Calu3 (cell line): ENCODE measurements at regions of chr6 and their contacts with region 1.

Region 1: GRCh38 chr6:137866914-137867684 is at the start of gene TNFAIP3:
- DNase-seq: peak; percentile 89
- H3K4me3 Mint-ChIP-seq: peak within 1 kb of the TSS; percentile 86
- H3K27ac Mint-ChIP-seq: peak within 1 kb of the TSS; percentile 71
- H3K4me1 Mint-ChIP-seq: peaks cover 25% of the 10 kb centered on the region
- H3K27me3 Mint-ChIP-seq: no peaks in the 10 kb centered on the region
- CTCF ChIP-seq: peak; percentile 63
- total RNA-seq, gene TNFAIP3: 19.4 and 22.6 TPM in 2 replicates

Region 2: GRCh38 chr6:137722749-137723272 is 144.3 kb before region 1 on chr6:
- CTCF ChIA-PET with region 1: no interaction called
- intact Hi-C with region 1: loop called (anchors 5 kb)
- DNase-seq: no peak
- H3K4me3 Mint-ChIP-seq: no peak overlapping the region
- H3K27ac Mint-ChIP-seq: no peak overlapping the region
- H3K4me1 Mint-ChIP-seq: peaks cover 7% of the 10 kb centered on the region
- H3K27me3 Mint-ChIP-seq: no peaks in the 10 kb centered on the region
- CTCF ChIP-seq: no peak

Region 3: DNA sequence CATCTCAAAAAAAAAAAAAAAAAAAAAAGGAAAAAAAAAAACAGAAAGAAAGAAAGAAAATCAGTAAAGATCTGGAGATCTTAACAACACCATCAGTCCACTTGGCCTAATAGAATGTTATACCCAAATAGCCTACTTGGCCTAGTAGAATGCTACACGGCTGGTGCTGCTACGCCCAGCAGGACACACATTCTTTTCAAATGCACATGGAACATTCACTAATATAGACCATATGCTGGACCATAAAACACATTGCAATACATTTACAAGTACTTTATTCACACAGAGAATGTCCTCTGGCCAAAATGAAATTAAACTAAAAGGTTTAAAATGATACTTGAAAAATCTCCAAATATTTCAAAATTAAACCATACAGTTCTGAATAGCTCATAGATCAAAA is 80.1 kb before region 1 on chr6:
- CTCF ChIA-PET with region 1: no interaction called
- intact Hi-C with region 1: no loop called
- DNase-seq: no peak
- H3K4me3 Mint-ChIP-seq: no peak overlapping the region
- H3K27ac Mint-ChIP-seq: no peak overlapping the region
- H3K4me1 Mint-ChIP-seq: no peaks in the 10 kb centered on the region
- H3K27me3 Mint-ChIP-seq: no peaks in the 10 kb centered on the region
- CTCF ChIP-seq: no peak

Region 4: DNA sequence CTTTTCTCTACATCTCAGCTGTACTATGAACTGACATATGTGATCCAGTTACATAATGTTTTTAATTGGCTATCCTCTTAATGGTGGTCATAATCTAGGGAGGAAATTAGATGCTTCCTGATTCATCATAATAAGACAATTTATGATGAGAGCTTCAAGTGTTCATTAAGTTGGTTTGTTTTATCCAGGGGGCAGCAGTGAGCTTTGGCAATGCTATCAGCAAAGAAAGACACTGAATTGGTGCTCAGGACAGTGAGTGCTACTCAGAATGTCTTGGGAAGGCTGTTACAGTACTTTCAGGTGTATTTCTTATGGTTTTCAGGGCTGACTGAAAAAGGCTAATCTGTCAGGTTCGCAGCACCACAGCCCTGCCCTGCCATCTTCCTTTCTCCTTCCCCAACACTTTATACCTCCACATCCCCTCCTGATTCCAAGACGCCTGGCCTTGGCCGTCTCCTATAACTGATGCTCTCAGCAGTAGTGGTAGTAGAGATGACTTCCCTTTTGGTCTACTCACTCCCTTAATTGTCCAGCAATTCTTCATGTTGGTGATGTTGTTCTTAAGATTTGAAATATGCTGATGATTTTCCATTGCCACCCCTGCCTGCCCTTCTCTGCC is 67.0 kb before region 1 on chr6:
- CTCF ChIA-PET with region 1: interaction called, 6 read pairs
- intact Hi-C with region 1: loop called (anchors 2 kb)
- DNase-seq: peak; percentile 41
- H3K4me3 Mint-ChIP-seq: no peak overlapping the region
- H3K27ac Mint-ChIP-seq: peak overlapping the region; percentile 81
- H3K4me1 Mint-ChIP-seq: peaks cover 14% of the 10 kb centered on the region
- H3K27me3 Mint-ChIP-seq: no peaks in the 10 kb centered on the region
- CTCF ChIP-seq: peak; percentile 18

Region 5: DNA sequence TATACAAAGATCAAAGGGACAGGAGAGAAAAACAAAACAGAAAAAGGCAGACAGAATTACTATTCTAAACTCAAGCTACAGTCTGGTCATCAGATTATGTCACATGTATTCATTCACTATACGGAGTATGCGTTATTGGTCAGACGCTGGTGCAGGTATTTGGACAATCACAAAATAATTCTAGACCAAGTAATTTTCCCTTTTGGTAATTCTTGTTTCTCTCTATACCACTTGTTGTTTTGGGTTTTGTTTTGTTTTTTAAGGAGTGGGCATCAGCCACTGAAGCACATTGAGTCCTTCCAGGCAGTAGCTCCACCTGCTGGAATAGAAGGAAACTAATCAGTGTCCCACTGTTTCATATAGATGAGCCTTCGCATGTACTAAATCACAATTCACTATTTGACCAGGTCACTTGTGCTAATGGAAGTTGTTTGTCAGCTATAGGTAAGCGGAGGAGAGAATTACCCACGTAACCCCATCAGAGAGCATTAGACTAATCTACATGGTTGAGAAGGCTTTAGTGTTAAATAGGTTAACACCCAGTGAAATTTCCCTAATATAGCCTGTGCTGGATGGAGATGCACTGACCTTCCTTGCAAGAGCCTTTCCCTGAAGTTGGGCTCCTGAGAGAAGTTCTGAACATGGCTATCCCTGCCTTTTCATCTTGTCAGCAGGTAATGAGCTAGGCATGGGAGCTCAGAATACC is 77.8 kb after region 1 on chr6:
- CTCF ChIA-PET with region 1: interaction called, 8 read pairs
- intact Hi-C with region 1: loop called (anchors 2 kb)
- DNase-seq: no peak
- H3K4me3 Mint-ChIP-seq: no peak overlapping the region
- H3K27ac Mint-ChIP-seq: no peak overlapping the region
- H3K4me1 Mint-ChIP-seq: no peaks in the 10 kb centered on the region
- H3K27me3 Mint-ChIP-seq: no peaks in the 10 kb centered on the region
- CTCF ChIP-seq: peak; percentile 58